ENCODE measurements at regions of chr22 and their contacts with region 1.

Region 1: DNA sequence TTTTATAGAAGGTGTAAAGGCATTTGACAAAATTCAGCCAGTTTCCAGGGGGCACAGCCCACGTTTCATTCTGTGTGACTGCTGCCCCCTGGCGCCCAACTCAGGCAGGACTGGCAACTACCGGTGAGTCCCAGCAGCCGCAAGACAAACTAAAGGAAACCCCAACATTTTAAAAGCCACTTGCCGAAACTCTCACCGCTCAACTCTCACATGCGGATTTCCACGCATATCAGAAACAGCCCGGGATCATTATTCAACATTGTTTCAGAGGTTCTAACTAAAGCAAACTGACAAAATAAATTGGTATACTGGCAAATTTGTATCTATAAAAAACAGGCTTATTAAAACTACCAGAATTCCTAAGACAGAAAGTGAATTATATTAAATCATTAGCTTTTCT is 48.2 kb downstream of the MORC2 start:
- DNase-seq: peak; percentile 68
- H3K27ac ChIP-seq: no peak overlapping the region
- CTCF ChIP-seq: peak; percentile 91

Region 2: DNA sequence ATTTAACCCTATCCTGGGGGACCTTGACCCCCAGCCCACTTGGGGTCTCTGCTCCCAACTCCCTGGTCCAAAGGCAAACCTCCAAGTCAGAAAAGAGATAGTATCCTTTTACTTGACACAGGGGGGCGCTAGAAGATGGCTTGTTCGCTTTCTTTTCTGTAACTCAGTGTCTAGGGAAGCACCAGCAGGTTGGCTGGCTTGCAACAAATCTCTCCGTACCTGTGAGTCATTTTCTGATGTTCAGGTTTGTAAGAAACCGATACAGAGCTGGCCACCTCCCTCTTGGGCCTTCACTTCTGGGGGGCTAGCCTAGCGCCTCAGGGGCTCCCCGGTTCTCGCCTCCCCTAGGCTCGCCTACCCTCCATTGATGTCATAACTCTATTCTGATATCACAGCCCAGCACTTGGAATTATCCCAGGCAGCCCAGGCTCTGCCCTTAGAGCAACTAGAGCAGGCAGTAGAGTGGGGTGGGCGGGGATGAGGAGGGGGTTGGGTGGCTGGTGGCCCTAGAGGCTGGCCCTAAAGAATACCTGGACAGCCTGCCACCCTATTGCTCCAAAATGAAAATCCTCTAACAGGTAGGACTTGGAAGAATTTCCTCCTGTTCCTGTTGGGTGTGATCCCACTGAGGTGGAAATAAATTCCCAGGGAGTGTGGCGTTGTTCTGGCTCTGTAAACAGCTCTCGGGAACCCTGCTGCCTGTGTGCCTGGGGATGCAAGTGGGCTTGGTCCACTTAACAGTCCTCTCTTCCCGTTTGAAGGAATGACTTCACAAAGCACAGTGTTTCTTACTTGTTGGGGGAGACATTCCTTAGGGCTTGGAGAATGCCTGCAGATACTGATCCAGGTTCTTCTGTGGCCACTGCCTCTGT is 156.4 kb before region 1 on chr22:
- CTCF ChIA-PET with region 1: interaction called, 10 read pairs
- POLR2A ChIA-PET with region 1: no interaction called
- DNase-seq: peak; percentile 73
- H3K27ac ChIP-seq: no peak overlapping the region
- CTCF ChIP-seq: peak; percentile 72

Region 3: DNA sequence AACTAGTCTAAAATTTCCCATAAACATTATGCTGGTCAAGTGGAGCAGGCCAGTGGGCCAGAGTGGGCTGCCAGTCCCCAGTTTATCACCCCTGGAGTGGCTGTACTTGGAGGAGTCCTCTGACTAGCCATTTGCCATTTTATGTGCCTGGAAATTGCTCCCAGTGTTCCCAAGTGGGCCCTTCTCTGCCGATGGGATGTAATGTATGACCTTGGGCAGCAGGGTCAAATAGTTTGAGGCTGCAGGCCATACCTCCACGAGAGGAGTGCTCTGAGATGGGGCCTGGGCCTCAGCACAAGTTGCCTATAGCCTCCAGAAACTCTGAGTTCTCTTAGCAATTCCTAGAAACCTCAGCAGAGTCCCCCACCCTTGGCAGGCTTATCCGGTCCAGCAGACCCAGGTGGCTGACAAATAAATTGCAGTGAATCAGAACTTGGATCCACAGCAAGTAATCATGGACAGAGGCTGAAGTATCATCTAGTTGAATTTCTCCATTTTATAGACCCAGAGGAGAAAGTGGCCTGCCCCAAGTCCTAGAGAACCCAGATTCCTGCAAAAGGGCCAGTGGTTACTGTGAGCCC is 443.6 kb after region 1 on chr22:
- CTCF ChIA-PET with region 1: no interaction called
- POLR2A ChIA-PET with region 1: no interaction called
- DNase-seq: no peak
- H3K27ac ChIP-seq: no peak overlapping the region
- CTCF ChIP-seq: no peak

Region 4: GRCh38 chr22:31425331-31426050 is 505.1 kb after region 1 on chr22:
- CTCF ChIA-PET with region 1: no interaction called
- POLR2A ChIA-PET with region 1: no interaction called
- DNase-seq: no peak
- H3K27ac ChIP-seq: no peak overlapping the region
- CTCF ChIP-seq: no peak